ENCODE measurements at regions of chr17 and their contacts with region 1.

Region 1: GRCh38 chr17:37047631-37048104 is 98.9 kb downstream of the AATF start:
- DNase-seq: peak; percentile 42 to 74 (median 69)
- ATAC-seq: peak; percentile 91
- H3K4me3 ChIP-seq: no peak overlapping the region
- H3K4me3 Mint-ChIP-seq: no peak overlapping the region
- H3K27ac ChIP-seq: no peak overlapping the region
- H3K27ac Mint-ChIP-seq: peak overlapping the region in 3 of 9 donors; percentile 28 to 75 (median 32)
- H3K4me1 ChIP-seq: no peaks in the 10 kb centered on the region
- H3K4me1 Mint-ChIP-seq: peaks cover 11 to 15% (median 12%) of the 10 kb centered on the region in 7 donors
- H3K27me3 ChIP-seq: no peaks in the 10 kb centered on the region
- H3K27me3 Mint-ChIP-seq: no peaks in the 10 kb centered on the region

Region 2: DNA sequence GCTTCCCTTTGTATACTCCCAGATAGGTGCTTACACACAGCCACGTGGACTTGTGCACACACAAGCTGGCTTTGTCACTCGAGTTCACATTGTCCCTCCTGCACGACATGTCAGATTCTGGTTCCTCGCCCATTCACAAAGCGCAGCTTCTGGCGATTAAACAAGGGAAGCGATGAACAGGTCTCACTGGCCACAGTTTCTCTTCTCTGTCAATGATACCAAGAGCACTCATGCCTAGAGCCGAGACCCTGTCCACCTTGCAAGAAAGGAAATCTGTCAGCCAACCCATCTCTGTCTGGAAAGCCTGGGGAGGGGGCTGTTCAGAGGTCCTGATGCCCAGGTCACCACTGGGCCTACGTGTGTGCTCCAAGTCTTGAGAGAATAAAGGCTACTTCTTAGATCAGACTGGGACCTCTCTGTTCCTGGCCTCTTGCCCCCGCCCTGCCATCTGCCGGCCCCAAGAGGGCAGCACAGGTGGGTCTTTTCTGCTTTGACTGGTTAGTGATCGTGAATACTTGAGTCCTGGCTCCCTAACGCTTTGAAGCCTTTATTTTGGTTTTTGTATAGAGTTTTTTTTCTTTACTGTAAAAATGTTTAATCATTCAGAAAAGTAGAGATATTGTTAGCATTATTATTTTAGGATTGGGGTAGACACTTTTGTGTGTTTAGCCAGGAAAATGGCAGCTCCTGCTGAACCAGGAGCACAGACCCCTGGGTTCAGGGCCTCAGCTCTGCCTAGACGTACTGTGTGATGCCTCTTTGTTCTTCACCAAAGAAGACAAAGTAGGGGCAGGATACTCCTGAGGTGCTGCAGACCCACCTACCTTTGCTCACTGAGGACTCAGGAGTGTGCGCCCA is 341.6 kb before region 1 on chr17:
- CTCF ChIA-PET with region 1: no interaction called
- POLR2A ChIA-PET with region 1: no interaction called
- intact Hi-C with region 1: loop called in 1 of 2 experiments (anchors 1 kb)
- DNase-seq: peak in 6 of 9 donors; percentile 26 to 47 (median 40)
- ATAC-seq: peak; percentile 74
- H3K4me3 ChIP-seq: no peak overlapping the region
- H3K4me3 Mint-ChIP-seq: no peak overlapping the region
- H3K27ac ChIP-seq: no peak overlapping the region
- H3K27ac Mint-ChIP-seq: no peak overlapping the region
- H3K4me1 ChIP-seq: no peaks in the 10 kb centered on the region
- H3K4me1 Mint-ChIP-seq: peaks cover 0 to 5% (median 0%) of the 10 kb centered on the region in 7 donors
- H3K27me3 ChIP-seq: peaks cover 0 to 5% of the 10 kb centered on the region in 2 donors
- H3K27me3 Mint-ChIP-seq: peaks cover 29 to 43% (median 39%) of the 10 kb centered on the region in 5 donors

Region 3: GRCh38 chr17:36948717-36949460 is 98.8 kb before region 1 on chr17 and contains the start of gene AATF:
- CTCF ChIA-PET with region 1: no interaction called
- POLR2A ChIA-PET with region 1: no interaction called
- intact Hi-C with region 1: loop called in 1 of 2 experiments (anchors 2 kb)
- DNase-seq: peak; percentile 93 to 99 (median 97)
- ATAC-seq: peak; percentile 99
- H3K4me3 ChIP-seq: peak within 1 kb of the TSS; percentile 69
- H3K4me3 Mint-ChIP-seq: peak within 1 kb of the TSS; percentile 91 to 99 (median 95)
- H3K27ac ChIP-seq: peak within 1 kb of the TSS; percentile 85
- H3K27ac Mint-ChIP-seq: peak within 1 kb of the TSS; percentile 91 to 97 (median 94)
- H3K4me1 ChIP-seq: peaks cover 21 to 33% of the 10 kb centered on the region in 2 donors
- H3K4me1 Mint-ChIP-seq: peaks cover 43 to 60% (median 51%) of the 10 kb centered on the region in 7 donors
- H3K27me3 ChIP-seq: peaks cover 7 to 18% of the 10 kb centered on the region in 2 donors
- H3K27me3 Mint-ChIP-seq: peaks cover 26 to 45% (median 34%) of the 10 kb centered on the region in 5 donors
- total RNA-seq, gene AATF: 39.7 to 70.8 (median 58.7) TPM

Region 4: DNA sequence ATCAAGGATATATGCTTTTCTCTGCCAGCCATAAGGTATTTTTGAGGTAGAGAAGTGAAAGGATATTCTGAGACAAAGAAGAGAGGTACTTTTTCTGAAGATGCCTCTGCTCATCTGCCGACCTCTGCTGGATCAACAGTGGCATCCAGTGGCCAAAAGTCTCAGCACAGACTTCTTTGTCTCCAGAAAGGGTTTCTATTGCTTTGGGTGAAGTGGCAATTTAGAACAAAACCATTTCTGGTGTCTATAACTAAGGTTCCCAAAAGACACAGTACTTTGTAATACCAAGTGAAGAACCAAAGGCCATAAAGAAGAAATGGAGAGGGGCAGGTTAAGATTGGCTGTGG is 172.9 kb after region 1 on chr17:
- CTCF ChIA-PET with region 1: no interaction called
- POLR2A ChIA-PET with region 1: no interaction called
- intact Hi-C with region 1: loop called in 1 of 2 experiments (anchors 1 kb)
- DNase-seq: peak in 3 of 9 donors; percentile 0 to 6 (median 4)
- ATAC-seq: no peak
- H3K4me3 ChIP-seq: no peak overlapping the region
- H3K4me3 Mint-ChIP-seq: no peak overlapping the region
- H3K27ac ChIP-seq: no peak overlapping the region
- H3K27ac Mint-ChIP-seq: no peak overlapping the region
- H3K4me1 ChIP-seq: no peaks in the 10 kb centered on the region
- H3K4me1 Mint-ChIP-seq: peaks cover 0 to 11% (median 0%) of the 10 kb centered on the region in 7 donors
- H3K27me3 ChIP-seq: no peaks in the 10 kb centered on the region
- H3K27me3 Mint-ChIP-seq: no peaks in the 10 kb centered on the region

Region 5: DNA sequence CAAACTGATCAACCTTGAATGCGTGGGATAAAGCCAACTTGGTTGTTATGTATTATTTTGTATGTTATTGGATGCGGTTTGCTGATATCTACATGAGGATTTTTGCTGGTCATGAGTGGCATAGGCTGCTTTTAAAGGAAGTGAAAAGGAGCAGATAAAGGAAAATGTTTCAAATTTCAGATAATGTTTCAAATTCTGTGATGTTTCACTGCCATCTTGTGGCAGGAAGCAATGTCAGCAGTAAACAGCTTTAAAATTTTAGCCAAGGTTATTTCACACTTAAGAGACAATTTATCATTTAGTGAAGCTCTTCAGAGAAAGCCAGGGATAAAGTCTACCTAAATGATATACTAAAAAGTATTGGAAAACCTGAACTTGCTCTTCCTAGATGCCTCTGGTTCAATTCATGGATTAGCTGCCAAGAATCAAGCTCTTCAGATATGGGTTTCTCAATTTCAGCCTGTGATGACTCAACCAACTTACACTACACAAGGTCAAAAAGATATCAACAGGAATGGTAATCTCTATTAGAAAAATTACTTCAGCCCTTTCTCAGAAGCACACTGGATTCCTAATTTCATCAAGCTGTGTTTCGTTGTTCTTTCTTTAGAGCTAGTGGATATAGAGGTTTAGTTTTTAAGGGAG is 192.1 kb after region 1 on chr17:
- CTCF ChIA-PET with region 1: no interaction called
- POLR2A ChIA-PET with region 1: no interaction called
- intact Hi-C with region 1: loop called in 1 of 2 experiments (anchors 5 kb)
- DNase-seq: peak in 4 of 9 donors; percentile 2 to 11 (median 6)
- ATAC-seq: no peak
- H3K4me3 ChIP-seq: no peak overlapping the region
- H3K4me3 Mint-ChIP-seq: no peak overlapping the region
- H3K27ac ChIP-seq: no peak overlapping the region
- H3K27ac Mint-ChIP-seq: peak overlapping the region in 1 of 9 donors; percentile 69
- H3K4me1 ChIP-seq: no peaks in the 10 kb centered on the region
- H3K4me1 Mint-ChIP-seq: peaks cover 0 to 4% (median 0%) of the 10 kb centered on the region in 7 donors
- H3K27me3 ChIP-seq: no peaks in the 10 kb centered on the region
- H3K27me3 Mint-ChIP-seq: no peaks in the 10 kb centered on the region

Measured in naive thymus-derived CD4-positive, alpha-beta T cell (primary cell).